Activated T-helper 2 cell treated with anti-CD3 and anti-CD28 coated beads, Interferon-gamma antibody, Interleukin-2, Interleukin-4, amounts not matched to agents 10 μg/mL and 5 μg/mL and 100 μg/mL, durations not matched to agents 14 hours and 24 hours and 36 hours (primary cell): ENCODE measurements at regions of chr2 and their contacts with region 1.

Region 1: GRCh38 chr2:144374163-144374661 is 145.7 kb downstream of the ZEB2 start:
- DNase-seq: no peak
- H3K4me3 Mint-ChIP-seq: no peak overlapping the region
- H3K27ac Mint-ChIP-seq: peak overlapping the region; percentile 86
- H3K4me1 Mint-ChIP-seq: peaks cover 83% of the 10 kb centered on the region
- H3K27me3 Mint-ChIP-seq: no peaks in the 10 kb centered on the region

Region 2: DNA sequence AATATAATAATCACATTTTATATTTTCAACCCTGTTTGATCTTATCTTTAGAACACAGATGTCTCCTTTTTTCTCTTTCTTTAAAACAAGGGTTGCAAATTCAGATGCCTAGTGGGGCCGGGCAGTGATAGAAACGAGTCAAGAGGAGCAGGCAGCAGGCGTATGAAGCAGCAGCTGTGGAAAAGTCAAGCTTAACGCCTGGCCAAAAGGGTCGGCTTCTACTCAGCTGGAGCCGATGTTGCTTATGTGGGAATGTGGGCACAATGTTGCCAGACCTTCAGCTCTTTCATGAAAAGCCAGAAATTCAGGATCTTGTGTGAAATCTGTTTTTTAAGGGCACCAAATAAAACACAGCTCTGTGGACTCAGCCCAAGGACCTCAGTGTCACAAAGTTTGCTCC is 602.3 kb before region 1 on chr2:
- intact Hi-C with region 1: no loop called
- DNase-seq: no peak
- H3K4me3 Mint-ChIP-seq: no peak overlapping the region
- H3K27ac Mint-ChIP-seq: no peak overlapping the region
- H3K4me1 Mint-ChIP-seq: no peaks in the 10 kb centered on the region
- H3K27me3 Mint-ChIP-seq: no peaks in the 10 kb centered on the region

Region 3: DNA sequence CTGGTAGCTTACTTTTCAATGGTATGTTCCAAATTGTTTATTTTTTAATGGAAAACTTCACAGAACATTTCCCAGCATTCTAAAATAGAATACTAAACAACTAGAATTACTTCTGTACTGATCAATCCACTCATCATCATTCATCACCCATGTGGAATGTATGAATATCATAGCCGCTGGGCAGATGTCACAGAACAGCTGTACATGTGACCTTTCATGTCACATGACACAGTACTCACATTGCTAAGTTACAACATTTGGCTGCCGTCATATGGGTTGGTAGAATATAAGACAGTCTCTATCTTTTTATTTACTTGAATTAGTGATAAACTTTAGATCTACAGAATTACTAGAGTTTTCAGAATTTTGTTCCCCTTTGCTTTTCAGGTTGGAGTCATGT is 241.9 kb before region 1 on chr2:
- intact Hi-C with region 1: loop called (anchors 5 kb)
- DNase-seq: no peak
- H3K4me3 Mint-ChIP-seq: no peak overlapping the region
- H3K27ac Mint-ChIP-seq: no peak overlapping the region
- H3K4me1 Mint-ChIP-seq: peaks cover 31% of the 10 kb centered on the region
- H3K27me3 Mint-ChIP-seq: no peaks in the 10 kb centered on the region

Region 4: DNA sequence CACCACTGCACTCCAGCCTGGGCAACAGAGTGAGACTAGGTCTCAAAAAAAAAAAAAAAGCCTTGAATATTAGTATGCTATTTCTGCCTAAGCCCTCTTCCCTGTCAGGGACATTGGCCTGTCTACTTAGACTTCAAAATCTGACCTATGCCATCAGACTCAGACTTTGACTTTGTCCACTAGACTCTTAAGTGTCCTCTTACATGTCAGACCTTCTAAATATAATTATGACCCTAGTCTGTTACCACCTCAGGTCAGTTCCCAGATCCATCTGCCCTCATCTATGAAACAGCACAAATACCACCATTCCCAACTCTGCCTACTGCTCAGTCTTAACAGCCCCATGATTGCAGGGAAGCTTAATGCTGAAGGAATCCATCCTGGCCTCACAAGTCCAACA is 98.9 kb before region 1 on chr2:
- intact Hi-C with region 1: loop called (anchors 5 kb)
- DNase-seq: no peak
- H3K4me3 Mint-ChIP-seq: no peak overlapping the region
- H3K27ac Mint-ChIP-seq: no peak overlapping the region
- H3K4me1 Mint-ChIP-seq: peaks cover 38% of the 10 kb centered on the region
- H3K27me3 Mint-ChIP-seq: no peaks in the 10 kb centered on the region

Region 5: GRCh38 chr2:144304202-144304601 is 70.0 kb before region 1 on chr2:
- intact Hi-C with region 1: no loop called
- DNase-seq: no peak
- H3K4me3 Mint-ChIP-seq: no peak overlapping the region
- H3K27ac Mint-ChIP-seq: peak overlapping the region; percentile 16
- H3K4me1 Mint-ChIP-seq: peaks cover 21% of the 10 kb centered on the region
- H3K27me3 Mint-ChIP-seq: no peaks in the 10 kb centered on the region

Region 6: GRCh38 chr2:144357623-144358373 is 16.4 kb before region 1 on chr2:
- intact Hi-C with region 1: loop called (anchors 1 kb)
- DNase-seq: no peak
- H3K4me3 Mint-ChIP-seq: no peak overlapping the region
- H3K27ac Mint-ChIP-seq: peak overlapping the region; percentile 56
- H3K4me1 Mint-ChIP-seq: peaks cover 35% of the 10 kb centered on the region
- H3K27me3 Mint-ChIP-seq: no peaks in the 10 kb centered on the region

Region 7: DNA sequence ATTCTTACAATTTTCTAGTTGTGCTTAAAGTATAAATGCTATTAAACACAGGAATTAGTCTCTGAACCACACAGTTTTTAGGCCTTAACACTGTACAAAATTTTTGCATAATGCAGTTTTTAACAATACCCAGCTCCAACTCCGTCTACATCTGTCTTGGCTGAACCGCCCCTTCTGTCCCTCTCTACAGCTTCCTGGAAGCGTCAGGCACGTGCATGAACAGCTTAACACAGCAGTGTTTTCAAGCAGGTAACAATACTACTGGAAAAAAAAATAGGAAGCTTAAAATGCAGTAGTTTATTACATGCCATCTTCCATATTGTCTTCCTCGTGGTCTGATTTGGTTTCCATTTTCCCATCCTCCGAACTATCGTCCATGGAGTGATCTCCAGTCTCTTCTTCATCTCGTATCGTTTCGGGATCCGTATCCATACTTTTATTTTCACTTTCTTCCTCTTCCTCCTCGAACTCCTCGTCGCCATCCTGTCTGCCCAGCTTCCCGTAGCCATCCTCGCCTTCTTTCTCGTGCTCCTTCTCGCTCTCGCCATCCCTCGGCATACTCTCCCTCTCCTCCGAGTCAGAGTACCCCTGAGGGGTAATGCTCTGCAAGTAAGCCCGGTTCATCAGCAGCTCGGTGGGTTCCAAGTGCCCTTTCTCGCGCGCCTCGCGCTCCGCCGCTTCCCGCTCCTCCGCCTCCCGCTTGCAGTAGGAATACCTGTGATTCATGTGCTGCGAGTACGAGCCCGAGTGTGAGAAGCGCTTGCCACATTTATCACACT is 15.1 kb after region 1 on chr2:
- intact Hi-C with region 1: no loop called
- DNase-seq: no peak
- H3K4me3 Mint-ChIP-seq: no peak overlapping the region
- H3K27ac Mint-ChIP-seq: no peak overlapping the region
- H3K4me1 Mint-ChIP-seq: peaks cover 4% of the 10 kb centered on the region
- H3K27me3 Mint-ChIP-seq: peaks cover 2% of the 10 kb centered on the region

Region 8: DNA sequence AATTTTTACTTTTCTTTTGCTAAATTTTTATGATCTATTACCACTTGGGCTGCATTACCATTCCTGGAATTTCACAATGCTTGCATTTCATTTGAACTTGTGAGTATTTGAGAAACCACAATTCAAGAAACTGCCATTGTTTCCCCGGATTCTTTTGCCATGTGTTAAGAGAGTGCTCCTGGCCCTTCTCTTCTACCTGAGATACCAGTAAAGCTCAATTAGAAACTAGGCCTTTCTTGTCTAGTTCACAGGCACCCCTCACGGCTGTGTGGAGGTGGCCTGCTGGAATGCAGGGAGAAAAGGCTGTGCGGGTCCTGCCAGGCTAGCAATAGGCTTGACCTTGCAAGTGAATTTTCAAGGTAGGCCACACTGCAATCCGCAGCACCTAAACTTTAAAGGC is 104.9 kb after region 1 on chr2:
- intact Hi-C with region 1: no loop called
- DNase-seq: no peak
- H3K4me3 Mint-ChIP-seq: no peak overlapping the region
- H3K27ac Mint-ChIP-seq: no peak overlapping the region
- H3K4me1 Mint-ChIP-seq: peaks cover 41% of the 10 kb centered on the region
- H3K27me3 Mint-ChIP-seq: no peaks in the 10 kb centered on the region

Region 9: GRCh38 chr2:144572977-144573376 is 198.8 kb after region 1 on chr2:
- intact Hi-C with region 1: loop called (anchors 5 kb)
- DNase-seq: no peak
- H3K4me3 Mint-ChIP-seq: no peak overlapping the region
- H3K27ac Mint-ChIP-seq: no peak overlapping the region
- H3K4me1 Mint-ChIP-seq: peaks cover 24% of the 10 kb centered on the region
- H3K27me3 Mint-ChIP-seq: peaks cover 21% of the 10 kb centered on the region